Activated T-helper 1 cell treated with anti-CD3 and anti-CD28 coated beads, Interleukin-12 subunit alpha, Interleukin-12 subunit beta, Interleukin-2, Interleukin-4 antibody, amounts not matched to agents 30 ng/mL and 10 ng/mL and 1 ng/mL, durations not matched to agents 14 hours and 24 hours and 36 hours (primary cell): ENCODE measurements at regions of chr17 and their contacts with region 1.

Region 1: DNA sequence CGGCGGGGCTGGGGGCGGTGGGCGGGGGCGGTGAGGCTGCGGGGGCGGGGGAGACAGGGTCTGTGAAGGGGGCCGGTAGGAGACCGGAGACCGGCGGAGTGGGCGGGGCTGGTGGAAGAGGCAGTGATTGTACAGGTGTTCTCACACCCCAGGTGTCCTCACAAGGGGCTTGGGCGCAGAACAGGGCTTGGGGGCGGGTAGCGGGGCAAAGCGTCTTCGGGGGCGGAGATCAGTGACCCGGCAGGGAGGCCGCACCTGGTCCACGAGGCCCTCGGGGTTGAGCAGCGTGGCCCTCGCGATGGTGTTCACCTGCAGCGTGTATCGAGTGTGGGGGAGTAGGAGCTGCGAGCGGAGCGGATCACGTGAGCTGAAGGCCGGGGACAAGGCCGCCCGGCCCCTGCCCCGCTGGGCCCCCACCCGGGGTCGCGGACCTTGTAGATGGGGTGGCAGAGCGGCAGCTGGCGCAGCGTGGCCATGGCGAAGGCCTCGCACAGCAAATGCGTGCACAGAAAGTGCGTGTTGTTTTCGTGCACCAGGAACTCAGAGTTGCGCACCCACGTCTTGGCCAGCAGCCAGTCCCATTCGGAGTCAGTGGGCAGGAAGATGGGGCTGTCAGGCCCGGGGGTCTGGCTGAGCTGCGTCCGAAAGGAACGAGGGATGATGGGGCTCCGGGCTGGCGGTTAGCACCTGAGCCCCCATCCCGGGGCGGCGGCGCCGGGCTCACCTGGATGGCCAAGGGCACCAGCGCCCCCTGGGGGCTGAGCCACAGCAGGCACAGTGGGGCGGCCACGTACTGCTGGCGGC is 8.5 kb downstream of the ALOXE3 start:
- DNase-seq: peak; percentile 68
- H3K4me3 Mint-ChIP-seq: no peak overlapping the region
- H3K27ac Mint-ChIP-seq: no peak overlapping the region
- H3K4me1 Mint-ChIP-seq: no peaks in the 10 kb centered on the region
- H3K27me3 Mint-ChIP-seq: peaks cover 40% of the 10 kb centered on the region

Region 2: DNA sequence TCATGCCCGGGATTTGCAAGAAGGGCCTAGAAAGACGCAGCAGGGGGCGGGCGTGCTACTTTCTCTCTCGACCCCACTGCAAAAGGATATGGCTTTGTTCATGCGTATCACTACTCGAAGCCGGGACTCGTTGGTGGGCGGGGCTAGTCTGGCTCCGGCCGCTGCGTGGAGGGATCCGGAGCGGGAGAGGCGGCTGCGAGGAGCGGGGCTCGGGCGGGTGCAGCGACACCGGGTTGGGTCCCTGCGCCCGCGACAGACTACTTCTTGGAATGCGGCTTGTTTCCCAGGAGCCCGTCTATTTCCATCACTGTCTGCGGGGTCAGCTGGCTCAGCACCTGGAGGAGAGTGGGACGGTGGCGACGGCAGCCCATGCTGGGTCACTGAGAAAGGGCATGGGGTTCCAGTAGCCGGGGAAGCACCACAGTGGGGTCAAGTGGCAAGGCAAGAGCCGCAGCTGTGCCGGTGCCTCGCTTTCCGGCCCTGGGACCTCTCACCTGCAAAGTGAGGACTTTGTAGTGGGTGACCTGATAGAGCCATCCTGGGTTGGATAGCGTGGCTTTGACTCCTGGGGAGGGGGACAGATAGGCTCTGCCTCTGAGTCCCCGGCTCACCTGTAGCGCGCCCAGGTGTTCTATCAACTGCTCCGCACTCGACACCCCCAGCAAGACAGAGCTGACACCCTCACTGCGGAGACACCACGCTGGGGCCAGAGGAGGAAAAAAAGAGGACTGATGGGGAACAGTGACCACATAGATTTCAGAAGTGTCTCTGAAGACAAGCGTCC is 186.8 kb before region 1 on chr17:
- intact Hi-C with region 1: no loop called
- DNase-seq: peak; percentile 76
- H3K4me3 Mint-ChIP-seq: peak overlapping the region; percentile 70
- H3K27ac Mint-ChIP-seq: peak overlapping the region; percentile 59
- H3K4me1 Mint-ChIP-seq: peaks cover 13% of the 10 kb centered on the region
- H3K27me3 Mint-ChIP-seq: no peaks in the 10 kb centered on the region

Region 3: DNA sequence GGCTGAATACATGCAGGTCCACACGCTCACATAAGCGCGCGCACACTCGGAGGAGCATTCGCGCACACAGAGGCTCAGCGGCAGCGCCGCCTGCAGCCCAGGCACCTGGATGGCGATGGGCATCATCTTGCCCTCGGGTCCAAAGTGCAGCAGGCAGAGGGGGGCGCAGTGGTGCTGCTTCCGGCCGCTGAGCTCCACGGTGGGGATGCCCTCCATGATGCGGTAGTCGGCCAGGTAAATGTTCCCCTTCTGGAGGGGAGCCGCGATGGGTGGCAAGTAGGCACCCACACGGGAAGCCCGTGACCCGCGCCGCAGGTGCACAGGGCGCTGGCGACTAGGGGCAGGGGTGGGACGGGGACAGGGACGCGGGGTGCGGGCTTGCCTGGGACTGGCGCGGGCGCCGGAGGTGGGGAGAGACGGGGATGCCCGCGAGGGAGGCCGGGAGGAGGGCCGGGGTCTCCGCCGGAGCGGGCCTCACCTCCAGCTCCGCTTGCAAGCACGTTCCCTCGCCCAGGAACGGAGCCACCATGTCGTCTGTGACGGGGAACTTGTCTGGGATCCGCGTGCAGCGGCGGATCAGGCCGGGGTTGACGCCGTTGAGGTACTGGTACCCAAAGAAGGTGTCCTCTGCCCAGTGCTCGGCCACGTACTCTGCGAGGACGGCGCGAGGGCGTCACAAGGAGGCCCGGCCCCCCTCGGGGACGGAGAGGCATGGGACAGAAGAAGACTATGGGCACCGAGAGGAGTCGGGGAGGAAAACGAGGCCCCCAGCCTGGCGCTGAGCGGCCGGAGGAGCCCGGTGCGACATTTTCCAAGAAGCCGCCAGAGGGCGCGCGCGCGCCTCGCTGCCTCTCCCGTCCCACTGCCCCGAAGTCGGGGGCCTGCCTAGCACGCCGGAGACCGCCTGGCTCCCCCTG is 30.3 kb before region 1 on chr17:
- intact Hi-C with region 1: loop called (anchors 2 kb)
- DNase-seq: peak; percentile 72
- H3K4me3 Mint-ChIP-seq: peak overlapping the region; percentile 91
- H3K27ac Mint-ChIP-seq: peak overlapping the region; percentile 88
- H3K4me1 Mint-ChIP-seq: peaks cover 8% of the 10 kb centered on the region
- H3K27me3 Mint-ChIP-seq: peaks cover 21% of the 10 kb centered on the region

Region 4: GRCh38 chr17:8091033-8091687 is 18.7 kb before region 1 on chr17:
- intact Hi-C with region 1: loop called (anchors 1 kb)
- DNase-seq: no peak
- H3K4me3 Mint-ChIP-seq: no peak overlapping the region
- H3K27ac Mint-ChIP-seq: no peak overlapping the region
- H3K4me1 Mint-ChIP-seq: peaks cover 14% of the 10 kb centered on the region
- H3K27me3 Mint-ChIP-seq: peaks cover 24% of the 10 kb centered on the region